Activated naive CD8-positive, alpha-beta T cell treated with anti-CD3 and anti-CD28 coated beads, Interleukin-2, amount 10 ng/mL, durations not matched to agents 7 days and 5 days (primary cell): ENCODE measurements at regions of chr1 and their contacts with region 1.

Region 1: GRCh38 chr1:40257688-40258444 is at the start of gene ZMPSTE24:
- DNase-seq: peak; percentile 91
- ATAC-seq: peak; percentile 96
- H3K4me3 Mint-ChIP-seq: peak within 1 kb of the TSS; percentile 94
- H3K27ac Mint-ChIP-seq: peak within 1 kb of the TSS; percentile 99
- H3K4me1 Mint-ChIP-seq: peaks cover 22% of the 10 kb centered on the region
- H3K27me3 Mint-ChIP-seq: no peaks in the 10 kb centered on the region
- total RNA-seq, gene ZMPSTE24: 20.6 to 21.2 TPM

Region 2: GRCh38 chr1:40161125-40161887 is 96.6 kb before region 1 on chr1 and contains the start of gene RLF:
- POLR2A ChIA-PET with region 1: interaction called, 14 read pairs
- DNase-seq: peak; percentile 97
- ATAC-seq: peak; percentile 97
- H3K4me3 Mint-ChIP-seq: no peak within 1 kb of the TSS
- H3K27ac Mint-ChIP-seq: no peak within 1 kb of the TSS
- H3K4me1 Mint-ChIP-seq: peaks cover 25% of the 10 kb centered on the region
- H3K27me3 Mint-ChIP-seq: no peaks in the 10 kb centered on the region
- total RNA-seq, gene RLF: 22.4 to 22.8 TPM

Region 3: DNA sequence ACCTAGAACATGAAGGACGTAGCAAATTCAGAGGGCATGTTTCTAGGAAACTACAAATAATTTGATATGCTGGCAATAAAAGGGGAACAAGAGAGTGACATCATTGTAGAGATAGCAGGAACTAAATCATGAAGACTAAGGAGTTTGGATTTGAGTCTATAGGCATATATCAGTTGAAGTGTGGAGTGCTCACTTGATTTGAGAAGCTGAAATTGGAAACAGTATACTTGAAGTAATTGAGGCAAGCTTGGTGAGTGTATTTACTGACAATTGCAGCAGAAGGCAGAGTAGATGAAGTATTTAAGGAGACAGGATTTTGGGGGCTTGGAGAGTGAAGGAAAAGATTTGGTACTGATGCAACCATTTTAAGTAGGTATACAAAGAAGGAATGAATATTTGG is 16.5 kb before region 1 on chr1:
- POLR2A ChIA-PET with region 1: interaction called, 29 read pairs
- DNase-seq: no peak
- ATAC-seq: peak; percentile 17
- H3K4me3 Mint-ChIP-seq: peak overlapping the region; percentile 52
- H3K27ac Mint-ChIP-seq: peak overlapping the region; percentile 79
- H3K4me1 Mint-ChIP-seq: peaks cover 27% of the 10 kb centered on the region
- H3K27me3 Mint-ChIP-seq: no peaks in the 10 kb centered on the region